Naive thymus-derived CD8-positive, alpha-beta T cell (primary cell): ENCODE measurements at regions of chr5 and their contacts with region 1.

Region 1: GRCh38 chr5:176543428-176544173 is 5.5 kb upstream of the CDHR2 start:
- DNase-seq: peak; percentile 64 to 84 (median 72)
- ATAC-seq: peak; percentile 67 to 68
- H3K4me3 Mint-ChIP-seq: peak overlapping the region; percentile 86 to 96 (median 94)
- H3K27ac Mint-ChIP-seq: peak overlapping the region; percentile 89 to 99 (median 96)
- H3K4me1 Mint-ChIP-seq: peaks cover 47 to 80% (median 72%) of the 10 kb centered on the region in 4 donors
- H3K27me3 Mint-ChIP-seq: no peaks in the 10 kb centered on the region

Region 2: DNA sequence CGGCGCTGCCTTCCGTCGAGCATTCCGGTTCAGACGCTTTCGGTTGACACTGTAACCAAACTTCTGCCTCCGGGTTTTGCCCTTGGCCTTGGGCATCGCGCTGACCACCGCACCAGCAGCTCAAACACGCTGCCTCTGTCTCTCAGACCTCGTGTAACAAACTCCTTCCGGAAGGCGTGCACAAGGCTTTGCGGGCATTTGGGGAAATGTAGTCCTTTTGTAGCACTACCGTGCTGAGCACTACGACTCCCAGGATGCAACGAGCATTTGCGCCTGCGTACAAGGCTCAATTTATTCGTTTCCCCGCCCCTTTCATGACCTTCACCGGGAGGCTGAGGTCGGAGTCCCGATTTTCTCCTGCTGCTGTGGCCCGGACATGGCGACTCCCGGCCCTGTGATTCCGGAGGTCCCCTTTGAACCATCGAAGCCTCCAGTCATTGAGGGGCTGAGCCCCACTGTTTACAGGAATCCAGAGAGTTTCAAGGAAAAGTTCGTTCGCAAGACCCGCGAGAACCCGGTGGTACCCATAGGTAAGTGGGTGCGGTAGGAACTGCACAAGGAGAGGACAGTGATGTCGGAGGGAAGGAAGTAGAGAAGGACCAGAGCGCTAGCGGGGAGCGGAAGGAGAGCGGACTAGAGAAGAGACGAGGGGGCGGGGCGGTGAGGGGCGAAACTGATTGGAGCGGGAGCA is 155.0 kb before region 1 on chr5 and contains the starts of genes HIGD2A and NOP16:
- POLR2A ChIA-PET with region 1: interaction called, 35 read pairs
- DNase-seq: peak; percentile 96 to 100 (median 98)
- ATAC-seq: peak; percentile 89 to 90
- H3K4me3 Mint-ChIP-seq: peak within 1 kb of the TSS; percentile 86 to 100 (median 99)
- H3K27ac Mint-ChIP-seq: peak within 1 kb of the TSS; percentile 95 to 100 (median 100)
- H3K4me1 Mint-ChIP-seq: peaks cover 17 to 42% (median 37%) of the 10 kb centered on the region in 4 donors
- H3K27me3 Mint-ChIP-seq: no peaks in the 10 kb centered on the region
- polyA plus RNA-seq, gene HIGD2A: 209 to 280 (median 250) TPM
- polyA plus RNA-seq, gene NOP16: 19.1 to 40.5 (median 22.8) TPM

Region 3: GRCh38 chr5:176415952-176416924 is 127.4 kb before region 1 on chr5 and contains the start of gene CLTB:
- POLR2A ChIA-PET with region 1: interaction called, 60 read pairs
- DNase-seq: peak; percentile 72 to 98 (median 85)
- ATAC-seq: peak; percentile 90 to 91
- H3K4me3 Mint-ChIP-seq: peak within 1 kb of the TSS; percentile 77 to 88 (median 82)
- H3K27ac Mint-ChIP-seq: peak within 1 kb of the TSS; percentile 72 to 92 (median 88)
- H3K4me1 Mint-ChIP-seq: peaks cover 20 to 52% (median 46%) of the 10 kb centered on the region in 4 donors
- H3K27me3 Mint-ChIP-seq: no peaks in the 10 kb centered on the region
- polyA plus RNA-seq, gene CLTB: 69.2 to 82.7 (median 73.5) TPM

Region 4: DNA sequence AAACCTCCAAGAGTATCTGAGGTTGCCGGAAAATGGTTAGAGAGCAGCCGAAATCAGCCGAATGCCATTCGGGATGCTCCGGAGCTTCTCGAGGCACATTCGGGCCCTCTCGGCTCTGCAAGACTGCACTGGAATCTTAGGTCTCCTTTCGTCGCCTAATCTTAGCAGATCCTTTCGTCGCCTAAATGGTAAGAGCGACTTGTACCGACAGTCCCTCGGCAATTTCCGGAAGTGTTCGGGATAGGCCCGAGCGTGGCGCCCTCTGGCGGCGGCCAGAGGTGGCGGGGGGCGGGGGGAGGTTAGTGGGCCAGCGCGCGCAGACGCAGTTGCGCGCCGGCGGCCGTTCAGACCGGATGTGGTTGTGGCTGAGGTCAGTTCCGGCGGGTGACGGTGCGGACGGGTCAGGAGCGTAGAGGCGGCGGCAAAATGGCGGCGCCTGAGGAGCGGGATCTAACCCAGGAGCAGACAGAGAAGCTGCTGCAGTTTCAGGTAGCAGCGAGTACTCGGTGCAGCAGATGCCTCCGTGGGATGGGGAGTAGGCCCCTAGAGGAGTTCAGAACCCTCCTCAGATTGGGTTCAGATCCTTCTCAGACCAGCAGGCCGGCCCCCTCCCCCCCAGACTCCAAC is 95.5 kb before region 1 on chr5 and contains the start of gene FAF2:
- POLR2A ChIA-PET with region 1: interaction called, 88 read pairs
- DNase-seq: peak; percentile 95 to 100 (median 98)
- ATAC-seq: peak; percentile 96 to 97
- H3K4me3 Mint-ChIP-seq: peak within 1 kb of the TSS; percentile 90 to 100 (median 97)
- H3K27ac Mint-ChIP-seq: peak within 1 kb of the TSS; percentile 96 to 99 (median 98)
- H3K4me1 Mint-ChIP-seq: peaks cover 17 to 52% (median 44%) of the 10 kb centered on the region in 4 donors
- H3K27me3 Mint-ChIP-seq: peaks cover 0 to 3% (median 0%) of the 10 kb centered on the region in 5 donors
- polyA plus RNA-seq, gene FAF2: 9.5 to 12.0 (median 11.4) TPM

Region 5: GRCh38 chr5:176573564-176574296 is 30.1 kb after region 1 on chr5:
- POLR2A ChIA-PET with region 1: interaction called, 15 read pairs
- DNase-seq: peak; percentile 44 to 87 (median 74)
- ATAC-seq: peak; percentile 92 to 95
- H3K4me3 Mint-ChIP-seq: no peak overlapping the region
- H3K27ac Mint-ChIP-seq: peak overlapping the region in 1 of 10 donors; percentile 28
- H3K4me1 Mint-ChIP-seq: peaks cover 3 to 12% (median 6%) of the 10 kb centered on the region in 4 donors
- H3K27me3 Mint-ChIP-seq: peaks cover 0 to 5% (median 0%) of the 10 kb centered on the region in 5 donors

Region 6: GRCh38 chr5:176619203-176619568 is 75.6 kb after region 1 on chr5:
- POLR2A ChIA-PET with region 1: no interaction called
- DNase-seq: peak; percentile 46 to 89 (median 76)
- ATAC-seq: peak; percentile 97 to 98
- H3K4me3 Mint-ChIP-seq: peak overlapping the region; percentile 22 to 91 (median 68)
- H3K27ac Mint-ChIP-seq: no peak overlapping the region
- H3K4me1 Mint-ChIP-seq: peaks cover 7 to 22% (median 18%) of the 10 kb centered on the region in 4 donors
- H3K27me3 Mint-ChIP-seq: peaks cover 11 to 76% (median 32%) of the 10 kb centered on the region in 5 donors